Common myeloid progenitor, CD34-positive (primary cell): ENCODE measurements at regions of chr6 and their contacts with region 1.

Region 1: GRCh38 chr6:3251462-3252314 is 7.1 kb upstream of the PSMG4 start:
- DNase-seq: peak; percentile 78 to 79 (median 79)
- H3K4me3 ChIP-seq: peak overlapping the region in 1 of 7 experiments; percentile 9
- H3K27ac ChIP-seq: no peak overlapping the region
- H3K4me1 ChIP-seq: peaks cover 0 to 7% (median 1%) of the 10 kb centered on the region in 4 experiments
- H3K27me3 ChIP-seq: peaks cover 0 to 34% (median 17%) of the 10 kb centered on the region in 5 experiments

Region 2: GRCh38 chr6:3125815-3126214 is 125.9 kb before region 1 on chr6:
- CTCF ChIA-PET with region 1: interaction called, 14 read pairs
- POLR2A ChIA-PET with region 1: no interaction called
- DNase-seq: no peak
- H3K4me3 ChIP-seq: no peak overlapping the region
- H3K27ac ChIP-seq: no peak overlapping the region
- H3K4me1 ChIP-seq: no peaks in the 10 kb centered on the region
- H3K27me3 ChIP-seq: no peaks in the 10 kb centered on the region

Region 3: GRCh38 chr6:3183066-3183465 is 68.6 kb before region 1 on chr6:
- CTCF ChIA-PET with region 1: no interaction called
- POLR2A ChIA-PET with region 1: no interaction called
- DNase-seq: no peak
- H3K4me3 ChIP-seq: no peak overlapping the region
- H3K27ac ChIP-seq: no peak overlapping the region
- H3K4me1 ChIP-seq: no peaks in the 10 kb centered on the region
- H3K27me3 ChIP-seq: peaks cover 0 to 6% (median 0%) of the 10 kb centered on the region in 5 experiments

Region 4: GRCh38 chr6:3231247-3232016 is 20.3 kb before region 1 on chr6:
- CTCF ChIA-PET with region 1: interaction called, 31 read pairs
- POLR2A ChIA-PET with region 1: no interaction called
- DNase-seq: peak in 2 of 3 donors; percentile 37 to 48
- H3K4me3 ChIP-seq: peak overlapping the region in 5 of 7 experiments; percentile 13 to 49 (median 38)
- H3K27ac ChIP-seq: no peak overlapping the region
- H3K4me1 ChIP-seq: peaks cover 3 to 56% (median 44%) of the 10 kb centered on the region in 4 experiments
- H3K27me3 ChIP-seq: peaks cover 19 to 80% (median 50%) of the 10 kb centered on the region in 5 experiments

Region 5: GRCh38 chr6:3239110-3239830 is 12.4 kb before region 1 on chr6:
- CTCF ChIA-PET with region 1: interaction called, 23 read pairs
- POLR2A ChIA-PET with region 1: no interaction called
- DNase-seq: no peak
- H3K4me3 ChIP-seq: no peak overlapping the region
- H3K27ac ChIP-seq: no peak overlapping the region
- H3K4me1 ChIP-seq: peaks cover 3 to 27% (median 11%) of the 10 kb centered on the region in 4 experiments
- H3K27me3 ChIP-seq: peaks cover 0 to 9% (median 2%) of the 10 kb centered on the region in 5 experiments

Region 6: DNA sequence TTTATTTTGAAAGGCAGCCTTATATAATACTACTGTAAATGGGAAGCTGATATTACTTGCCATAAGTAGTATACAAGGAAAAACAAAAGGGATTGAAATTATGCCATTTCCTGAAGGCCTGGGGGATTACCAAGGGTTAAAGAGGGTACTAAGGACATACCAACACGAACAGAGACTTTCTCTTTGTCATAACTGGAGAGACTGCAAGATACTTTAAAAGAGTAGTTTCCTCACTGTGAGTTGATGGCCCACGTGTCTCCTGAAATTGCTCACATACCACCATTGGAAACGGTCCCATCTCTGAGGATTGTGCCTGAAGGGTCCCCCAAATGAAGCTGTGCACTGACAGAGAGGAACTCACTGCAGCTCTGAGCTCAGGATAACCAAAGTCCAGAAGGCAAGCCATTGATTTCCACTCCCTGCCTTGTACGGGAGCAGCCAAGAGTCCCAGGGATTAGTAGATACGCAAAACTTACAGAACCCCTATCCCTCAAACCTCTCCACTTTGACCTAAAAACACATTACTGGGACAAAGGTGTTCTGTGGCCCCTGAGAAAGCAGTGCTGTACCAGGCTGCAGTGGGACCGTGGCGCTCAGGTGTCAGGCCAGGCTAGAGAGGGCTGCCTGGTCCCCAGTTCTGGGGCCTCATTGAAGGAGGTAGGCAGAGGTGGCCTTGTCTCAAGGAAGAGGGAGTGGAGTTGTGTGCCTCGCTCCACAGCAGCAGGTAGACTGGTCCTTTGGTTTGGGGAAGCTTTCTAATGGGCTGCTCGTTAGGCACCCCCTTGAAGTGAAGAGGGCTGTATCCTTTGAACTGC is 22.2 kb after region 1 on chr6:
- CTCF ChIA-PET with region 1: no interaction called
- POLR2A ChIA-PET with region 1: no interaction called
- DNase-seq: no peak
- H3K4me3 ChIP-seq: no peak overlapping the region
- H3K27ac ChIP-seq: no peak overlapping the region
- H3K4me1 ChIP-seq: no peaks in the 10 kb centered on the region
- H3K27me3 ChIP-seq: no peaks in the 10 kb centered on the region